ENCODE measurements at regions of chr3 and their contacts with region 1.

Region 1: DNA sequence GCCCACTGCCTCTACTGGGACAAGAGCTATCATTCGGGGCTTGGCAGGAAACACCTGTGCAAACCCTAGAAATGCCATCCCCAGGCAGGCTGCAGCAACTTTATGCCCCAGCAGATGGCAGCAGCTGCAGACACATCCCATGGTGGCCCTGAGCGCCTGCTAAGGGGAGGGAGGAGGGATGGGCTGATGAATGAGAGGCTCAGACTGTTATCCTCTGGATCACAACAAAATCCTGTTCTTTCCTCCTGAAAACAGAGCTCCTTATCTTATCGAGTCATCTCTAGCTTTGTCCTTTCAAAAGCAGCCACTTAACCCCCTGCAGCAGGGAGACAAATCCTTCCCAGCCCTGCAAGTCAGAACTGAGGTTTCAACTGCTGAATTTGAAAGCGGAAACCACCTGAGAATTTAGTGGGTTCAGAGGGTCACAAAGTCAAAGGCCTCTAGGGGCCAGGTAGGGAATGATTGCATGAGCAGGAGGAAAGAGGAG is 90.6 kb upstream of the PROK2 start:
- DNase-seq: peak; percentile 90
- H3K4me3 Mint-ChIP-seq: no peak overlapping the region
- H3K27ac Mint-ChIP-seq: peak overlapping the region; percentile 71
- H3K4me1 Mint-ChIP-seq: peaks cover 37% of the 10 kb centered on the region
- H3K27me3 Mint-ChIP-seq: peaks cover 5% of the 10 kb centered on the region

Region 2: GRCh38 chr3:71779674-71780377 is 95.7 kb before region 1 on chr3:
- CTCF ChIA-PET with region 1: interaction called, 3 read pairs
- POLR2A ChIA-PET with region 1: no interaction called
- intact Hi-C with region 1: loop called (anchors 1 kb)
- DNase-seq: no peak
- H3K4me3 Mint-ChIP-seq: peak overlapping the region; percentile 12
- H3K27ac Mint-ChIP-seq: no peak overlapping the region
- H3K4me1 Mint-ChIP-seq: peaks cover 15% of the 10 kb centered on the region
- H3K27me3 Mint-ChIP-seq: peaks cover 50% of the 10 kb centered on the region

Region 3: DNA sequence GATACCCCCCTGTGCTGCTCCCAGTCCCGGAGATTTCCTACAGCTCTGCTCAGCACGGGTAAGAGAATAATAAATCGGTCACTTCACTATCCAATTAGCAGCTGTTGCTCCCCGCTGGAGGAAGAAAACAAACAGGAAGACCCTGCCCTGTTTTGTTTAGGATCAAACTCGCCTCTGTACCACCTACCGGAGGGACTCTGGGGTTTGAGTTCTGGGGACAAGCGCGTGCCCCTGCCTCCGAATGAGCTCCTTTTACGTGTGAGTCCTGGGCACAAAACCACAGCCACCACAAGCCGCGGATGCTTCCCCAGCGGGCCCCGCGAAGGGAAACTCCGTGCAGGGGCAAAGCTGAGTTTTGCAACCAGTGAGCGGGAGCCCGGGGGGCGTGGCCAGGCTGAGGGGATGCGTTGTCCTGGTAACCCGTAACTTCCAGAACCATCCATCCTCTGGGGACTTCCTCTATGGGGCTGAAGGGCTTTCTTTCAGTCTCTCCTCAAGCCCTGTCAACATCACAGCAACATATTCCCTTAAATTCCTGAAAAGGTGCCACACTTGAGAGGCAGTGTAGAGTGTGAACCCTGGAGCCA is 225.2 kb after region 1 on chr3:
- CTCF ChIA-PET with region 1: interaction called, 3 read pairs
- POLR2A ChIA-PET with region 1: no interaction called
- intact Hi-C with region 1: loop called (anchors 10 kb)
- DNase-seq: peak; percentile 97
- H3K4me3 Mint-ChIP-seq: peak overlapping the region; percentile 78
- H3K27ac Mint-ChIP-seq: peak overlapping the region; percentile 70
- H3K4me1 Mint-ChIP-seq: peaks cover 22% of the 10 kb centered on the region
- H3K27me3 Mint-ChIP-seq: peaks cover 3% of the 10 kb centered on the region

Region 4: GRCh38 chr3:72177083-72178050 is 301.9 kb after region 1 on chr3:
- CTCF ChIA-PET with region 1: no interaction called
- POLR2A ChIA-PET with region 1: no interaction called
- intact Hi-C with region 1: no loop called
- DNase-seq: peak; percentile 20
- H3K4me3 Mint-ChIP-seq: no peak overlapping the region
- H3K27ac Mint-ChIP-seq: no peak overlapping the region
- H3K4me1 Mint-ChIP-seq: peaks cover 5% of the 10 kb centered on the region
- H3K27me3 Mint-ChIP-seq: peaks cover 39% of the 10 kb centered on the region

Region 5: GRCh38 chr3:72347819-72348319 is 472.4 kb after region 1 on chr3:
- CTCF ChIA-PET with region 1: no interaction called
- POLR2A ChIA-PET with region 1: no interaction called
- intact Hi-C with region 1: loop called (anchors 10 kb)
- DNase-seq: peak; percentile 78
- H3K4me3 Mint-ChIP-seq: no peak overlapping the region
- H3K27ac Mint-ChIP-seq: no peak overlapping the region
- H3K4me1 Mint-ChIP-seq: peaks cover 48% of the 10 kb centered on the region
- H3K27me3 Mint-ChIP-seq: no peaks in the 10 kb centered on the region

Region 6: DNA sequence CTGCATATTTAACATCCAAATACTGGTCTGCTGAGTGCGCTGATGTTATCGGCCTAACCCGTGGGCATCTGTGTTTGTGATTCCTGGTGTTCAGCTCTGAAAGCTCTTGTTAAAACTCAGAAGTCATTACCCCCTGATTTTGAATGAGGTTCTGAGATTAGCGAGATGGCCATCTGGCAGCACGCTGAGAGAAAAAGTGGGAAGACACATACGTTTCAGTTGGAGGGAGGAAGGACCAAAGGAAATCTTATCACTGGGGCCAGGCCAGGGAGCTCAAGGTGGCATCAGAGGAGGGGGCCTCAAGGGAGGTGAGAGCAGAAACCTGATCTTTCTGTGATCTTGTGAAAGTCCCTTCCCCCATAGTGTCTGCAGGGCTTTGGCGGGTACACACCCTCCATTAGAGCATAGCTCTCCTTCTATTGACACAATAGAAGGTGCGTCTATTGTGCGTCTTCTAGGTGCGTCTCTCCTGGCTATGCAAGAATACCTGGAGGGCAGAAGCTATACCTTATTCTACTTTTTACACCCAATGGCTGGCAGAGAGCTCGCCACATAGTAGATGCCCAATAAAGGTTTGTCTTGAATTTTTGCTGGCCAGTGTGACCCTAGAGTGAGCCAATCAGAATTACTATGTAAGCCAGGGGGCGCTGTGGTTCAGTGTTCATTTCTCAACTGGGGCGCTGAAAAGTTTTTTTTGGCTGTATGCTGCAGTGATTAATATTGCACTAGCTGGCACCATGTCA is 790.4 kb after region 1 on chr3:
- CTCF ChIA-PET with region 1: interaction called, 5 read pairs
- POLR2A ChIA-PET with region 1: no interaction called
- intact Hi-C with region 1: loop called (anchors 1 kb)
- DNase-seq: peak; percentile 69
- H3K4me3 Mint-ChIP-seq: no peak overlapping the region
- H3K27ac Mint-ChIP-seq: no peak overlapping the region
- H3K4me1 Mint-ChIP-seq: no peaks in the 10 kb centered on the region
- H3K27me3 Mint-ChIP-seq: no peaks in the 10 kb centered on the region

Measured in activated CD4-positive, alpha-beta memory T cell treated with anti-CD3 and anti-CD28 coated beads for 36 hours (primary cell).